CD4-positive, alpha-beta memory T cell (primary cell): ENCODE measurements at regions of chr9 and their contacts with region 1.

Region 1: GRCh38 chr9:40907657-40908624 is 220.5 kb downstream of the FOXD4L6 start:
- DNase-seq: no peak
- H3K4me3 ChIP-seq: peak overlapping the region in 1 of 2 donors; percentile 2
- H3K4me3 Mint-ChIP-seq: no peak overlapping the region
- H3K27ac ChIP-seq: no peak overlapping the region
- H3K27ac Mint-ChIP-seq: no peak overlapping the region
- H3K4me1 ChIP-seq: no peaks in the 10 kb centered on the region
- H3K4me1 Mint-ChIP-seq: no peaks in the 10 kb centered on the region
- H3K27me3 ChIP-seq: no peaks in the 10 kb centered on the region
- H3K27me3 Mint-ChIP-seq: peaks cover 2 to 5% of the 10 kb centered on the region in 2 donors

Region 2: GRCh38 chr9:40935336-40935735 is 27.4 kb after region 1 on chr9:
- CTCF ChIA-PET with region 1: no interaction called
- POLR2A ChIA-PET with region 1: no interaction called
- intact Hi-C with region 1: loop called (anchors 5 kb)
- DNase-seq: no peak
- H3K4me3 ChIP-seq: no peak overlapping the region
- H3K4me3 Mint-ChIP-seq: no peak overlapping the region
- H3K27ac ChIP-seq: no peak overlapping the region
- H3K27ac Mint-ChIP-seq: no peak overlapping the region
- H3K4me1 ChIP-seq: no peaks in the 10 kb centered on the region
- H3K4me1 Mint-ChIP-seq: peaks cover 0 to 2% (median 0%) of the 10 kb centered on the region in 4 donors
- H3K27me3 ChIP-seq: no peaks in the 10 kb centered on the region
- H3K27me3 Mint-ChIP-seq: no peaks in the 10 kb centered on the region